ENCODE measurements at regions of chr1 and their contacts with region 1.

Region 1: DNA sequence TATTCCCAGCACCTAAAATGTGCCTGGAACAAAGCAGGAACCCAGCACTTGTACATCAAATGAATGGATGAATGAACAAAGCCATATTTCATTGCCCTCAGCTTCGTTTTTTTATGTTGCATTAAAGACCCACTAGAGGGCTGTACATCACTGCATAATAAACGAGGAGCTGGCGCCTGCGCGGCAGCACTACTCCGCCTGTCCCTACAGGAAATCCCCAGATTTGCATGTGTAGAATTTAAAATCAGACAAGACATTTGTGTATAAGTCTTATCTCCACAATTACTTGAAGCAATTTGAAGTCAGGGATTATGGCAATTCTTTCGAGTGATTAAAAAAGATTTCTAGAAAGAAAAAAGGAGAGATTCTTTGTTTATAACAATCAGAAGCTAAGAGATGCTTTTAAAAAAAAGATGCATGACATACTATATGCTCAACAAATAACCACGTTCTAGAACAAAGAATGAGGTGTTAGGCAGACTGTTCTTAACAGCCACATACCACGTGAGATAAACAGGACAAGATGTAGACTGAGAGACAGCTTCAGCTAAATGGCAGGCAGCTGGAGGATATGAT is 5.4 kb upstream of the NEK2 start:
- DNase-seq: peak; percentile 48
- ATAC-seq: peak; percentile 90
- H3K4me3 Mint-ChIP-seq: peak overlapping the region; percentile 26
- H3K27ac Mint-ChIP-seq: peak overlapping the region; percentile 85
- H3K4me1 Mint-ChIP-seq: peaks cover 41% of the 10 kb centered on the region
- H3K27me3 Mint-ChIP-seq: no peaks in the 10 kb centered on the region
- CTCF ChIP-seq: no peak

Region 2: GRCh38 chr1:211648980-211649934 is 31.6 kb before region 1 on chr1:
- CTCF ChIA-PET with region 1: no interaction called
- POLR2A ChIA-PET with region 1: no interaction called
- intact Hi-C with region 1: no loop called
- DNase-seq: no peak
- ATAC-seq: peak; percentile 86
- H3K4me3 Mint-ChIP-seq: no peak overlapping the region
- H3K27ac Mint-ChIP-seq: no peak overlapping the region
- H3K4me1 Mint-ChIP-seq: no peaks in the 10 kb centered on the region
- H3K27me3 Mint-ChIP-seq: peaks cover 6% of the 10 kb centered on the region
- CTCF ChIP-seq: no peak

Region 3: DNA sequence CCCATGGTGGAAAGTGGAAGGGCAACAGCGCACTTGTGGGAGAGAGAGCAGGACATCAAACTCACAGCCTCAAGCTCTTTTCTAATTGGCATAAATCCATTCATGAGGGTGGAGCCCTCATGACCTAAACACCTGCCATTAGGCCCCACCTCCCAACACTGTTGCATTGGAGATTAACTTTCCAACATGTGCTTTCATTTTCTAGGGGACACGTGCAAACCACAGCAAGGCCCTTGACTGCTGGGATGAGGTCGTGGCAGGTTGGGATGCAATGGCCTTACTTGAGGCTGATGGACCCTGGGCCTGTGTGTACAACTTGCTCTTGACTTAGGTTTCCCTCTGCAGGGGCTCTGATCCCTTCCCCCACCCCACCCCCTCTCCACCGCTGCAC is 30.5 kb after region 1 on chr1:
- CTCF ChIA-PET with region 1: no interaction called
- POLR2A ChIA-PET with region 1: no interaction called
- intact Hi-C with region 1: no loop called
- DNase-seq: no peak
- ATAC-seq: no peak
- H3K4me3 Mint-ChIP-seq: no peak overlapping the region
- H3K27ac Mint-ChIP-seq: no peak overlapping the region
- H3K4me1 Mint-ChIP-seq: peaks cover 9% of the 10 kb centered on the region
- H3K27me3 Mint-ChIP-seq: no peaks in the 10 kb centered on the region
- CTCF ChIP-seq: no peak

Region 4: DNA sequence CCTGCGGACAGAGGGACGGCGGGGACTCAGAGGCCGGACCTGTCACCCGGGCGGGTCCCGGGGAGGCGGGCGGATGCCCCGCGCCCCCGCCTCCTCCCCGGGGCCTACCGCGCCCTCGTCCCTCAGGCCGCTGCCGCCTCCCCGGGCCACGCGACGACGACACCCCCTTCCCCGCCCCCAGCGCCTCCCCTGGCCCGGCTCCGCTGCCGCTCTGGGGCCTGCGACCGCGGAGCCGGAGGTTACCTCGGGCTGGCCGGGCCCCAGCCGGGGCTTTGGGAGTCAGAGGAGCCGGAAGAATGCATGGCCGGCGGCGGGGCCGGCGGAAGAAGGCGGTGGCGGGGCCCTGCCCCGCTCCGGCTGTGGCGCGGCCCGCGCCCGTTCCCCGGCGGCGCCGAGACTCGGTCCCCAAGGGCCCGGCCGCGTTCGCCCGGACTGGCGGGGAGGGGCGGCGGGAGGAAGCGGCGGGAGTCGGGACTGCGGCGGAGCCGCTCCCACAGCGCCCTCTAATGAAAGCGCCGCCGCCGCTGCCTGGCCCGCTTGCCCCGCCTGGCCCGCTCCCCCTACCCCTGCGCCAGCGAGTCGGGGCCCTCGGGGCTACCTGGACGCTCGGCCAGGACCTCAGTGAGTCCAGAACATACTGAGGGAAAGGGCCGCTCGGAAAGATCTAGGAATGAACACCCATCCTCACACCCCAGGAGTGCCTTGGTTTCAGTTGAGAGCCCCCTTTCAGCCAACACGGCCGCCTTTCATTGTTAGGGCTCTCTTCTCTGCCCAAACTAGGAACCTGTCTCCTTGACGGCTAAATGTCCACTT is 149.7 kb after region 1 on chr1 and contains the start of gene LPGAT1:
- CTCF ChIA-PET with region 1: interaction called, 10 read pairs
- POLR2A ChIA-PET with region 1: no interaction called
- intact Hi-C with region 1: loop called (anchors 1 kb)
- DNase-seq: peak; percentile 78
- ATAC-seq: peak; percentile 86
- H3K4me3 Mint-ChIP-seq: peak within 1 kb of the TSS; percentile 95
- H3K27ac Mint-ChIP-seq: peak within 1 kb of the TSS; percentile 89
- H3K4me1 Mint-ChIP-seq: peaks cover 55% of the 10 kb centered on the region
- H3K27me3 Mint-ChIP-seq: no peaks in the 10 kb centered on the region
- CTCF ChIP-seq: no peak
- total RNA-seq, gene LPGAT1: 39.2 and 43.6 TPM in 2 replicates

Region 5: DNA sequence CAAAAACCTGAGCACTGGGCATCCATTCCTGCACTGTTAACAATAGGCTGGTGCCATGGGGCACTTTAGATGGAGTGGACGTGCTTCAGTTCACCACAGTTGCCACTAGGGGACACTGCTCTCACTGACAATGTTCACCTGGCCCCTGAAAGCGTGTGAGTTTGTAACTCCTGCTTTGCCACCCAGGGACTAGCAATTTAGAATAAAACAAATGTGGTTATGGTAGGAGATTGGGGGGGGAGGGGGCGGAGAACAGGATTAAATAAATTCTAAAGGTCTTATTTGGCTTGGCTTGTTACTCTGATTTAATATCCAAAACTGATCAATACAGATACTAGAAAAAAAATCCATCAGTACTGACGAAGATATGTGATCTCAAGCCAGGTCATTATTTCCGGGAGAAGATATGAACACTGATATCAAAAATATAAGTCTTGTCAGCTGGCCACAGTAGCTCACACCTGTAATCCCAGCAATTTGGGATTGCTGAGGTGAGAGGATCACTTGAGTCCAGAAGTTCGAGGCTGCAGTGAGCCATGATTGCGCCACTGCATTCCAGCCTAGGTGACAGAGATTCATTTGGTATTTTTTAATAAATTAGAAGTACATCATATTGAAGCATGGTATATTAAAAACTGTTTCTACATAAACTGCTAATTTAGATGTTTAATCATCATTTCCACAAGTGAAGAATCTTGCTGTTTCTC is 331.3 kb after region 1 on chr1:
- CTCF ChIA-PET with region 1: interaction called, 10 read pairs
- POLR2A ChIA-PET with region 1: no interaction called
- intact Hi-C with region 1: loop called (anchors 1 kb)
- DNase-seq: no peak
- ATAC-seq: peak; percentile 99
- H3K4me3 Mint-ChIP-seq: no peak overlapping the region
- H3K27ac Mint-ChIP-seq: no peak overlapping the region
- H3K4me1 Mint-ChIP-seq: no peaks in the 10 kb centered on the region
- H3K27me3 Mint-ChIP-seq: no peaks in the 10 kb centered on the region
- CTCF ChIP-seq: peak; percentile 64

Region 6: GRCh38 chr1:212070720-212071302 is 390.0 kb after region 1 on chr1:
- CTCF ChIA-PET with region 1: interaction called, 26 read pairs
- POLR2A ChIA-PET with region 1: no interaction called
- intact Hi-C with region 1: loop called (anchors 2 kb)
- DNase-seq: no peak
- ATAC-seq: peak; percentile 47
- H3K4me3 Mint-ChIP-seq: no peak overlapping the region
- H3K27ac Mint-ChIP-seq: no peak overlapping the region
- H3K4me1 Mint-ChIP-seq: no peaks in the 10 kb centered on the region
- H3K27me3 Mint-ChIP-seq: no peaks in the 10 kb centered on the region
- CTCF ChIP-seq: no peak

Region 7: DNA sequence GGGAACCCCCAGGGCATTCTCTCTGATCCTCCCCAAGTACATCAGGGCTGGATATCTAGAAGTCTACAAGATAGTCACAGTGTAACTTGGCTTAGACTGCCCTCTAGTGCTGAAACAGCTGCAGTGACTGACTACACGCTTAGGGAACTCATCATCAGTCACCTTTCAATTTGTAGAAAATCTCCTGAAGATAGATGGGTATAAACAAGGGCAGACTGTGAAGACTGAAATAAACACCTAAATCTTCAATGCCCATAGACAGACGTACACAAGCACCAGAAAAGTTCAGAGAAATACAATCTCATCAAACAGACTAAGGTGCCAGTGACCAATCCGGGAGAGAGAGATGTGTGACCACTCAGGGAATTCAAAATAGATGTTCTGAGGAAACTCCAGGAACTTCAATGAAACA is 687.2 kb after region 1 on chr1:
- CTCF ChIA-PET with region 1: interaction called, 12 read pairs
- POLR2A ChIA-PET with region 1: no interaction called
- intact Hi-C with region 1: loop called (anchors 1 kb)
- DNase-seq: no peak
- ATAC-seq: peak; percentile 89
- H3K4me3 Mint-ChIP-seq: no peak overlapping the region
- H3K27ac Mint-ChIP-seq: no peak overlapping the region
- H3K4me1 Mint-ChIP-seq: no peaks in the 10 kb centered on the region
- H3K27me3 Mint-ChIP-seq: no peaks in the 10 kb centered on the region
- CTCF ChIP-seq: peak; percentile 25

Region 8: GRCh38 chr1:213003256-213003655 is 1322.4 kb after region 1 on chr1:
- CTCF ChIA-PET with region 1: no interaction called
- POLR2A ChIA-PET with region 1: no interaction called
- intact Hi-C with region 1: no loop called
- DNase-seq: no peak
- ATAC-seq: no peak
- H3K4me3 Mint-ChIP-seq: no peak overlapping the region
- H3K27ac Mint-ChIP-seq: no peak overlapping the region
- H3K4me1 Mint-ChIP-seq: peaks cover 2% of the 10 kb centered on the region
- H3K27me3 Mint-ChIP-seq: no peaks in the 10 kb centered on the region
- CTCF ChIP-seq: no peak